Sciatic nerve (tissue), 2 donors: ENCODE measurements at regions of chr3 and their contacts with region 1.

Region 1: GRCh38 chr3:48472915-48473616 is 26.5 kb downstream of the ATRIP start:
- DNase-seq: peak; percentile 94
- ATAC-seq: peak; percentile 95

Region 2: DNA sequence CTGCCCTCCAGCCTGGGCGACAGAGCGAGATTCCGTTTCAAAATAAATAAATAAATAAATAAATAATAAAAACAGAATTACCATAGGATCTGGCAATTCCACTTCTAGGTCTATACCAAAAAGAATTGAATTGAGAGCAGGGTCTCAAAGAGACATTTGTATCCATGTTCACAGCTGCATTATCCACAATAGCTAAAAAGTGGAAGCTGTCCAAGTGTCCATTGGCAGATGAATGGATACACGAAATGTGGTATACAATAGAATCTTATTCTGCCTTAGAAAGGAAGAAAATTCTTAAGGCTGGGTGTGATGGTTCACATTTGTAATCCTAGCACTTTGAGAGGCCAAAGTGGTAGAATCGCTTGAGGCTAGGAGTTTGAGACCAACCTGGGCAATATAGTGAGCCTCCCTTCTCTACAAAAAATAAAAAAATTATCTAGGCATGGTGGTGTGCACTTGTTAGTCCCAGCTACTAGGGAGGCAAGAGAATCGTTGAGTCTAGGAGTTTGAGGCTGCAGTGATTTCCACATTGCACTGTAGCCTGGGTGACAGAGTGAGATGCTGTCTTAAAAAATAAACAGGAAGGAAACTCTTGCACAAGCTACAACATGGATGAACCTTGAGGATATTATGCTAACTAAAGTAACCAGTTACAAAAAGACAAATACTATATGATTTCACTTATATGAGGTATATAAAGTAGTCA is 59.4 kb after region 1 on chr3:
- intact Hi-C with region 1: loop called (anchors 2 kb)
- DNase-seq: no peak
- ATAC-seq: no peak